Body of pancreas (tissue), 4 donors: ENCODE measurements at regions of chr22 and their contacts with region 1.

Region 1: DNA sequence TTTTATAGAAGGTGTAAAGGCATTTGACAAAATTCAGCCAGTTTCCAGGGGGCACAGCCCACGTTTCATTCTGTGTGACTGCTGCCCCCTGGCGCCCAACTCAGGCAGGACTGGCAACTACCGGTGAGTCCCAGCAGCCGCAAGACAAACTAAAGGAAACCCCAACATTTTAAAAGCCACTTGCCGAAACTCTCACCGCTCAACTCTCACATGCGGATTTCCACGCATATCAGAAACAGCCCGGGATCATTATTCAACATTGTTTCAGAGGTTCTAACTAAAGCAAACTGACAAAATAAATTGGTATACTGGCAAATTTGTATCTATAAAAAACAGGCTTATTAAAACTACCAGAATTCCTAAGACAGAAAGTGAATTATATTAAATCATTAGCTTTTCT is 48.2 kb downstream of the MORC2 start:
- DNase-seq: peak; percentile 70 to 84 (median 76)
- ATAC-seq: peak; percentile 74
- H3K4me3 ChIP-seq: no peak overlapping the region
- H3K27ac ChIP-seq: no peak overlapping the region
- H3K4me1 ChIP-seq: peaks cover 22% of the 10 kb centered on the region
- H3K27me3 ChIP-seq: no peaks in the 10 kb centered on the region
- CTCF ChIP-seq: peak; percentile 69 to 91 (median 84)
- POLR2A ChIP-seq: no peak

Region 2: GRCh38 chr22:30649430-30650007 is 270.9 kb before region 1 on chr22:
- intact Hi-C with region 1: loop called (anchors 10 kb)
- DNase-seq: peak in 3 of 4 donors; percentile 18 to 69 (median 50)
- ATAC-seq: peak; percentile 35
- H3K4me3 ChIP-seq: no peak overlapping the region
- H3K27ac ChIP-seq: no peak overlapping the region
- H3K4me1 ChIP-seq: peaks cover 7% of the 10 kb centered on the region
- H3K27me3 ChIP-seq: no peaks in the 10 kb centered on the region
- CTCF ChIP-seq: no peak
- POLR2A ChIP-seq: no peak

Region 3: DNA sequence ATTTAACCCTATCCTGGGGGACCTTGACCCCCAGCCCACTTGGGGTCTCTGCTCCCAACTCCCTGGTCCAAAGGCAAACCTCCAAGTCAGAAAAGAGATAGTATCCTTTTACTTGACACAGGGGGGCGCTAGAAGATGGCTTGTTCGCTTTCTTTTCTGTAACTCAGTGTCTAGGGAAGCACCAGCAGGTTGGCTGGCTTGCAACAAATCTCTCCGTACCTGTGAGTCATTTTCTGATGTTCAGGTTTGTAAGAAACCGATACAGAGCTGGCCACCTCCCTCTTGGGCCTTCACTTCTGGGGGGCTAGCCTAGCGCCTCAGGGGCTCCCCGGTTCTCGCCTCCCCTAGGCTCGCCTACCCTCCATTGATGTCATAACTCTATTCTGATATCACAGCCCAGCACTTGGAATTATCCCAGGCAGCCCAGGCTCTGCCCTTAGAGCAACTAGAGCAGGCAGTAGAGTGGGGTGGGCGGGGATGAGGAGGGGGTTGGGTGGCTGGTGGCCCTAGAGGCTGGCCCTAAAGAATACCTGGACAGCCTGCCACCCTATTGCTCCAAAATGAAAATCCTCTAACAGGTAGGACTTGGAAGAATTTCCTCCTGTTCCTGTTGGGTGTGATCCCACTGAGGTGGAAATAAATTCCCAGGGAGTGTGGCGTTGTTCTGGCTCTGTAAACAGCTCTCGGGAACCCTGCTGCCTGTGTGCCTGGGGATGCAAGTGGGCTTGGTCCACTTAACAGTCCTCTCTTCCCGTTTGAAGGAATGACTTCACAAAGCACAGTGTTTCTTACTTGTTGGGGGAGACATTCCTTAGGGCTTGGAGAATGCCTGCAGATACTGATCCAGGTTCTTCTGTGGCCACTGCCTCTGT is 156.4 kb before region 1 on chr22:
- intact Hi-C with region 1: loop called (anchors 10 kb)
- DNase-seq: peak; percentile 51 to 74 (median 62)
- ATAC-seq: peak; percentile 50
- H3K4me3 ChIP-seq: no peak overlapping the region
- H3K27ac ChIP-seq: no peak overlapping the region
- H3K4me1 ChIP-seq: no peaks in the 10 kb centered on the region
- H3K27me3 ChIP-seq: no peaks in the 10 kb centered on the region
- CTCF ChIP-seq: peak; percentile 14 to 64 (median 48)
- POLR2A ChIP-seq: no peak